Thyroid gland (tissue), 4 donors: ENCODE measurements at regions of chr1 and their contacts with region 1.

Region 1: GRCh38 chr1:18919197-18919905 is 17.0 kb upstream of the ALDH4A1 start:
- DNase-seq: no peak
- H3K4me3 ChIP-seq: no peak overlapping the region
- H3K27ac ChIP-seq: no peak overlapping the region
- H3K4me1 ChIP-seq: peaks cover 26 to 33% of the 10 kb centered on the region in 2 donors
- H3K27me3 ChIP-seq: no peaks in the 10 kb centered on the region
- CTCF ChIP-seq: no peak
- POLR2A ChIP-seq: no peak

Region 2: DNA sequence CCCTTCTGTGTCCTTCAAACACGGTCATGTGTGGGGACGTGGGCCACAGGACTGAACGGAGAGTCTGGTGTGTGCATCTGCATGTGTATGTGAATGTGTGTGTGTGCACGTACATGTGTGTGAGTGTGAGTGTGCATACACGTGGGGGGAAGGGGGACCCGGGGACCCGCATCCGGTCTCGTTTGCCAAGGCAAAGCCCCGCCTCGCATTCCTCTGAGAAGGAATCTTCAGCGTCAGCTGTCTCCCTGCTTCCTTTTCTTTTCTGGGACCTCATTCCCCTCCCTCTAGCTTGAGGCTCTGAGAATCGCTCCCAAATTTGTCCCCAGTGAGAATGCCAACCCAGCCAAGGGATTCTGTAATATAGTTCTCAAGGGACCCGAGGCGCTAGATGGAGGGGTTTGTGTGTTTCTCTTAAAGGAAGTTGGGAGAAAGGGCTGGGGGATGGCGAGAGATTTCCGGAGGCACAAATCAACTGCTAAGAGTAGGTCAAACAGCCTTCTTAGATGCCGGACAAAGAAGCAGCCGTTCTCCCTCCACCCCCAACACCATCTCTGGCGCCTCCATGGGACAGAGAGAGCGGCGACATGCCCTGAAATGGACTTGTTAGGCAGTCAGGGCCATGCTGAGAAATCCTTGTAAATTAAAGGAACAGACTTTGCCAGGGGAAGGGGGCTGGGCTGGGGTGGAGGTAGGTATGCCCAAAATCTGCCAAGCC is 30.5 kb after region 1 on chr1:
- intact Hi-C with region 1: loop called (anchors 5 kb)
- DNase-seq: no peak
- H3K4me3 ChIP-seq: peak overlapping the region in 1 of 3 donors; percentile 12
- H3K27ac ChIP-seq: peak overlapping the region; percentile 41 to 89 (median 77)
- H3K4me1 ChIP-seq: peaks cover 78 to 94% of the 10 kb centered on the region in 2 donors
- H3K27me3 ChIP-seq: no peaks in the 10 kb centered on the region
- CTCF ChIP-seq: no peak
- POLR2A ChIP-seq: no peak

Region 3: DNA sequence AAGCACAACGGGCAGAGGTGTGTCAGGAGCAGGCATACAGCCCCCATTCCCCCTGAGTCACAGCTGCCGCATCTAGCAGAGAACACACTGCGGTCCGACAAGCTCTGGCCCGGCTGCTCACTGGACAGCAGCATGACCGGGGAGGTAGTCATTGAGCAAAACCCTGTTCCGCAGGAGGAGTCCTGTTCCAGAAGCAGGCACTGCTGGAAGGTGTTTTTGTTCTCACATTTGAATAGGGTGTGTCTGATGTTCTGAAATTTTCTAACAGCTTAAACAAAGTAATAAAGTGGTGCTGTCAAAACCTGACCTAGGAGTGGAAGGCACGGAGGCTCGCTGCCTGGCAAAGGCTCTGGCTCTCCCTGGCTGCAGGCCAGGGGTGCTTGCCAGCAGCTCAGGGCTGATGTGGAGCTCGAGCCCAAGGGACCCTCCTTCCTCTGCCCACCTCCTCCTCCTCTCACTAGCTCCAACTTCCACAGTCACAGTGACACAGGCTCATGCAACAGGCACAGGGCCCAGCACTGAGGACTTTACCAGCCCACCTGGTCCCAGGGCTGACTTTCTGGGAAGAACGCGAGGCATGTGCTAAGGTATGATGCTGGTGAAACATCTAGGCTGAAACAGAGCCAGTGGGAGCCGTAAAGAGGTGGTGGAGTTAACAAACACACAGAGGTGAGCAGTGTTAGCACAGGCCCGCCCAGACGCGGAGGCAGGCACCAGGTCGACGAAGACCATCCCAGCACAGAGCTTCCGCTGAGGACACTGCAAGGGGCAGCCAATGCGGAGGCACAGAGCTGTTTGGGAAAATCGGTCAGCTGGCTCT is 155.8 kb after region 1 on chr1:
- intact Hi-C with region 1: loop called (anchors 5 kb)
- DNase-seq: peak; percentile 78 to 83
- H3K4me3 ChIP-seq: no peak overlapping the region
- H3K27ac ChIP-seq: peak overlapping the region in 2 of 3 donors; percentile 40 to 80
- H3K4me1 ChIP-seq: peaks cover 14 to 43% of the 10 kb centered on the region in 2 donors
- H3K27me3 ChIP-seq: no peaks in the 10 kb centered on the region
- CTCF ChIP-seq: no peak
- POLR2A ChIP-seq: no peak